Posterior vena cava (tissue), 2 donors: ENCODE measurements at regions of chr7 and their contacts with region 1.

Region 1: DNA sequence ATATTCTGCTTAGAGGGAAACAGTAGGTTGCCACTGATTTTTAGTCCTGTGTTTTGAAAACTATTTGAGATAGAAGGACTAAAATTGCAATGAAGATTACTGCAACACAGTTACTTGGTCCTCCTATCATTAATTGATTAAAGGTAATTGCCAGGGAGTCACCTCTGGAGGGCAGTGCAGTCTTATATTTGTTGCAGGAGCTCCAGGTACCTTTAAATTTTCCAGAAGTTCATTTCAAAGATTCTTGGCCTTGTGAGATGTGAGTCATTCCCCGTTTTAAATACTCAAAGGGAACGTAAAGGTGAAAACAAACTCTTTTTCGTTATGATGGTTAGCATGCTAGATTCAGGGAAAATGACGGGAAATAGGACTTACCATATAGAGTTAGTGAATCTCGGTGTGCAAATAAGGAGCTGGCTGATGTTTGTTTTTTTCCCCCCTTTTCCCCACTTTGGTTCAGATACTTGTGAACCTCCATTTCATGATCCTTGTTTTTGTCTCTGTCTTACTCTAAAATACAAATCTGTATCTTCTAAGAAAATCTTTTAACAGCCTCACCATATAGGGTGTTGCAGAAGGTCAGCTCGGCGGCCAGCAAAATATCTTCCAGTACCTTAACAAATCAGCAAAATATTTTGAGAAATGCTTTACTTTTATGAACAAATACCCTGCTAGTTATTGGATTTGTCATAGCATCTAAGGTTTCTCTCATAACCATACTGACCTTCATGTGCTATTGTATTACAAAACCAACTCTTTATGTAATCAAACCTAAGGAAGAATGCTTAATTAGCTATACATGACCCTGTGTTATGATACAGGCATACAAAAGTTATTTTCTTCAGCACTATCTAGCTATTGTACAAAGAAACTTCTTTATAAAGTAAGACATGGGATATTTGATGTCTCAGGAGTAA is 143.0 kb upstream of the HDAC9 start:
- DNase-seq: no peak

Region 2: DNA sequence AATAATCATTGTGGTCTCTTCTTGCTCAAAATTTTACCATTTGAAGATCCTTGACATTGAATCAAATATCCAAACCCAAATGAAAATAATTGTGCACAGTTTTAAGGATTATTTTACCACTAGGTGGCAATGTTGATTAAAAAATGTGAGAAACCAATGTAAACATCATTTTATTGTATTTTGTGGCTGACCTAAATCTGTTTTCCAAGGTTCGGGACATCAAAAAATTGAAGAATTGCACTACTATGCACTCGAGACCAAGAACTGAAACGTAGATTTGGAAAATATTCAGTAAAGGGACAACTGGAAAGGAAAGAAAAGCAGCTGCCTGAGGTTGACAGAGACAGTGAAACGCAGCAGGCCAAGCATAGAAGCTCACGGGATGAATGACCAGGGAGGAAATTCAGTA is 671.6 kb before region 1 on chr7:
- intact Hi-C with region 1: loop called in 1 of 2 experiments (anchors 10 kb)
- DNase-seq: no peak

Region 3: GRCh38 chr7:17758008-17758407 is 594.6 kb before region 1 on chr7:
- intact Hi-C with region 1: no loop called
- DNase-seq: no peak

Region 4: GRCh38 chr7:18570890-18571478 is 218.4 kb after region 1 on chr7:
- intact Hi-C with region 1: loop called (anchors 10 kb)
- DNase-seq: no peak

Region 5: GRCh38 chr7:18666107-18666728 is 313.6 kb after region 1 on chr7:
- intact Hi-C with region 1: loop called in 1 of 2 experiments (anchors 10 kb)
- DNase-seq: peak; percentile 91